ENCODE measurements at regions of chr14 and their contacts with region 1.

Region 1: DNA sequence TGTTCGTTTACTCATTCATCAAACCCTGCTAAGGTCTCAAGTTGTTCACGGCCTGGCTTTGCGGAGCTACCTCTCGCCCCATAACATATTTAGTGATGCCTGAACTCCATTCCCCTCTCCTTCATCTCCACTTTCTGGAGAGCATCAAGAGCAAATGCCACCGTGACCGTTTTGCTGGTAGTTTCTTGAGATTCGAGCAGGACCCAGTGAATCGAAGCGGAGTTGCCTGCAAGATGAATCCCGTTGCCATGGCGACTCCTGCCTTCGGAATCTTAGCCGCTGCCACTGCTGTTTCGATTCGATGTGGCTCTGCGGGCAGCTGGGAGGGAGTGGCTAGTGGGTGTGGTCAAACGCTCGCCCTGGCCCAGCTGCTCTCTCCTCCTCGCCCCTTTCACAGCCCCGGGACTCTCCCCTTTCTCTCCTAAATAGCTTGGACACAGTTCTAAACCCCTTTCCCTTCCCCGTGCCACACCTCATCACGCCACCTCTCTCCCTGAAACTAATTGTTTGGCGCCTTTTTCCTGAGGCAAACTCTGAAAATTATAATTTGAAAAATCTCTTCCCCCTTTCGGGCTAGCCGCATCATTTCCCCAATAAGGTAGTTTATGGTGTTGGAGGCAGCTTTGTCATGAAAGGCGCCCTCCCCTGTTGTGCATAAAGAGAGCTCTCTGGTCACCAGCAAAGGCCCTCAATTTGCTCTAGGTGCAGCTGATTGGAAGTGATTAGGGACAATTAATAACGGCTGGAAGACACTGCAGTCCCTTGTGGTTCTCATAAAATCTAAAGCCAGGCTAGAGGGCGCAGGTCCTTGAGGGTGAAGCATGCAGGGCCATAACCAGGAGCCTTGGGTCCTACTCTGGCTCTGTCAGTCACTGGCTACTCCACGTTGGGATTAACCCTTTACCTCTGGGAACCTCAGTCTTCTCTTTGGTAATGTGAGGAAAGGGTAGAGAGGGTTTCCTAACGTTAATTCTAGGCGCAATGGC is 1.6 kb downstream of the DAAM1 start:
- DNase-seq: peak; percentile 83
- H3K4me3 ChIP-seq: peak overlapping the region; percentile 85
- H3K27ac ChIP-seq: peak overlapping the region; percentile 73
- H3K4me1 ChIP-seq: peaks cover 61% of the 10 kb centered on the region
- CTCF ChIP-seq: peak; percentile 74

Region 2: DNA sequence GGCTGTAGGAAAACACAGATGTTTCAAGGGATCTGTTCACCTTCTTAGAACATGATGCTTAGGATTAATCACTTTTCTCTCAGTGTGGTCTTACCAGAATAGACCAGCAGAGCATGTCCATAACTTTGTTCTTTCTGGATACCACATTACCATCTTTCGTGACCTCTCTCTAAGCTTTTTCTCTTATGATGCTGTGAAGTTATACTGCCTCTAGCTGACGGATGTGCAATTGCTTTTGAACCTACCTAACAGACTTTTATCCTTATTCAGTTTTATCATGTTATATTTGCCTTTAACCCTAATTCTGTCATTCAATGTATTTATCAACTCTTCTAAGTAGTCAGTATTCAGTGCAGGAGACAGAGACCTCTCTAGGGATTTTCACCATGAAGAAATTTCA is 305.6 kb before region 1 on chr14:
- CTCF ChIA-PET with region 1: no interaction called
- POLR2A ChIA-PET with region 1: no interaction called
- intact Hi-C with region 1: no loop called
- DNase-seq: peak; percentile 8
- H3K4me3 ChIP-seq: no peak overlapping the region
- H3K27ac ChIP-seq: no peak overlapping the region
- H3K4me1 ChIP-seq: no peaks in the 10 kb centered on the region
- CTCF ChIP-seq: peak; percentile 69

Region 3: DNA sequence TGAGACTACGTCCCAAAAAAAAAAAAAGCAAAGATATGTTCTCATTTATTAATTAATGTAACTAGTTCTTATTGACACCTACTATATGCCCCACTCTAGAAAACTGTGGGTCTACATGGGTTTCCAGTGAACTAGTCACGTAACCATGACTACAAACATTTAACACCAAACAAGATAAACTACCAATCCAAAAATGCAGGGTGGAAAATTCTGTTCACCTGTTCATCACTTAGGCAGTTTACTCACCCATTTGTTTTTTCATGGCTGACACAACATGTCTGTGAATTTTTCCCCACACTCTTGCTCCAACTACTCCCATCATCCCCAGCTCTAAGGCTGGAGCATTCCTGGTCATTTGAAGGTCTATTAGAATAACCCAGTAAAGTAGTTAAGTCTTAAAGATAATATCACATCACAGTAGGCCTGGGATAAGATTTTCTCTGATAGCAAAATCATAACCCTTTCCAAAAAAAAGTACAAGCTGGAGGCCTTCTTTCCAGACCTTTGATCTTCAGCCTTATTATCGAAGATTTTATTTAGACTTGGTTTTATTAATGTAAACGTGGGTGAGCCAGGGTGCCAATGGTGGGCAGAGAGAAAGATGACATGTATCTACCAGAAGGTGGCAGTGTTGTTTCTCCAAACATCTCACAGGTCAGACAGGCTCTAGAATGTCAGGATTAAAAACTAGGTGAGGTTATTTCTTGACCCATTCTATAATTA is 63.2 kb before region 1 on chr14:
- CTCF ChIA-PET with region 1: interaction called, 3 read pairs
- POLR2A ChIA-PET with region 1: interaction called, 3 read pairs
- intact Hi-C with region 1: loop called (anchors 1 kb)
- DNase-seq: peak; percentile 83
- H3K4me3 ChIP-seq: no peak overlapping the region
- H3K27ac ChIP-seq: no peak overlapping the region
- H3K4me1 ChIP-seq: peaks cover 21% of the 10 kb centered on the region
- CTCF ChIP-seq: peak; percentile 98

Region 4: GRCh38 chr14:59150990-59151389 is 39.1 kb before region 1 on chr14:
- CTCF ChIA-PET with region 1: no interaction called
- POLR2A ChIA-PET with region 1: interaction called, 11 read pairs
- intact Hi-C with region 1: loop called (anchors 1 kb)
- DNase-seq: peak; percentile 82
- H3K4me3 ChIP-seq: peak overlapping the region; percentile 8
- H3K27ac ChIP-seq: peak overlapping the region; percentile 66
- H3K4me1 ChIP-seq: peaks cover 62% of the 10 kb centered on the region
- CTCF ChIP-seq: no peak

Region 5: GRCh38 chr14:59301354-59301753 is 111.3 kb after region 1 on chr14:
- CTCF ChIA-PET with region 1: interaction called, 3 read pairs
- POLR2A ChIA-PET with region 1: interaction called, 7 read pairs
- intact Hi-C with region 1: loop called (anchors 1 kb)
- DNase-seq: peak; percentile 96
- H3K4me3 ChIP-seq: peak overlapping the region; percentile 57
- H3K27ac ChIP-seq: peak overlapping the region; percentile 99
- H3K4me1 ChIP-seq: peaks cover 98% of the 10 kb centered on the region
- CTCF ChIP-seq: no peak

Region 6: DNA sequence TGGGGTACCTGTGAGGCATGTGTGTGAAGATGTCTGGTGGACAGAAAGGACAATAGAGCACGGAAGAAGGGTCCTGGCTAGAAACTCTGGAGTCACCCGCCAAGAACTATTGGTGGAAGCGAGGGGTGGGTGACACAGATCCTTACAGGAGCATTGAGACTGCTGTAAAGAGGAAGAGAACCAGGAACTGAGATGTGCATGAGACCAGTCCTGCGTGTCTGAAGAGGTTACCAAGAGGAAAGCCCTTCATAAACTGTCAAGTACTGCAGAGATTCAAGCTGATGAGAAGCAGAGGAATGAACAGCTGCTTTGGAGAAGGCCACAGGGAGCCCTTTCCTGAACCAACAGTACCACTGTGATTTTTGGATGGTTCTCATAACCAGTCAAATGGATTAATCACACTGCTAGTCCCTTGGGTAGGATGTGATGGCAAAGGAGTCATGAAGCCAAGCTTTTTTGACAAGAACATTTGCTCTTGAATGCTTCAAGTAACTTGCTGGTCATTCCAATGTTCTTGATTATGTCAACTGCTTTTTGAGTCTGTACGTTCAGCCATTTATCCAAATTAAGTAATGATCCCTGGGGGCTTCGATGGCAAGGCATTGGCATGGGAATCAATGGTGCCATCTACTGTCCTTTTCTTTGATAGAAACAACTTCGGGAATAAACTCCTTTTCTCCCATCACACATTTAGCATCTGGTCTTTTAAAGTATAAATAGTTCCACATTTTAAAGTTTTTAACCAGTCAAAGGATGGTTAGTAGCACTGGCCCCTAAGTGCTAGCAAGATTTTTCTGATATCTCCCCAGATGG is 232.2 kb after region 1 on chr14:
- CTCF ChIA-PET with region 1: no interaction called
- POLR2A ChIA-PET with region 1: no interaction called
- intact Hi-C with region 1: loop called (anchors 5 kb)
- DNase-seq: peak; percentile 64
- H3K4me3 ChIP-seq: no peak overlapping the region
- H3K27ac ChIP-seq: peak overlapping the region; percentile 16
- H3K4me1 ChIP-seq: peaks cover 26% of the 10 kb centered on the region
- CTCF ChIP-seq: peak; percentile 79

Region 7: DNA sequence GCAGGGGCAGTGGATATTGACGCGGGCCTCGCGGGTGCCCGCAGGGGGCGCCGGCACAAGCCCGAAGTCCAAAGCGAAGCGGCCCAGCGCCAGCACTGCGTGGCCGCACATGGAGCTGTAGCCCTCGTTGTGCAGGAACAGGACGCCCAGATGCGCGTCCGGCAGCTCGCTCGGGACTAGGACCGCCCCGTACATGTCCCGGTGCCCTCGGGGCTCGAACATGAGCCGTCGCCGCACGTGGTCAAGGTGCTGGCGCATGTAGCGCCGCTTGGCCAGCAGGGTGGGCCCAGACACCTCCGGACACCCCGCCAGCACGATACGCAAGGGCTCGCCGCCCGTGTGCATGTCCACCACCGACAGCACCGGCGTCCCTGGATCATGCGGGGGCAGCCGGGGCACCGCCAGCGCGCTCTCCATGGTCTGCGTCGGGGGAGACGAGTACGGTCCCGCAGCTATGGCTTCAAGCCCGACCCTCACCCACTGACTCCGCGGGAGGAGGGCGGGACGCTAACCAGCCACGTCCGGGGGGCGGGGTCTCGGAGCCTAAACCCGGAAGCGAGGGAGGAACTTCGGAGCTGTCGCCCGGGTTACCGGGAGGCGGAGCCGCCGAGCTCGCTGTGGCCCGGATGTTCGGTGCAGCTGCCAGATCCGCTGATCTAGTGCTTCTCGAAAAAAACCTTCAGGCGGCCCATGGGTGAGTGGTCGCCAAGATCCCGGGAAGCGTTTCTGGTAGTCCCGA is 294.0 kb after region 1 on chr14 and contains the starts of genes JKAMP and L3HYPDH:
- CTCF ChIA-PET with region 1: no interaction called
- POLR2A ChIA-PET with region 1: interaction called, 3 read pairs
- intact Hi-C with region 1: loop called (anchors 1 kb)
- DNase-seq: peak; percentile 98
- H3K4me3 ChIP-seq: peak within 1 kb of the TSS; percentile 87
- H3K27ac ChIP-seq: peak within 1 kb of the TSS; percentile 58
- H3K4me1 ChIP-seq: peaks cover 38% of the 10 kb centered on the region
- CTCF ChIP-seq: peak; percentile 69
- total RNA-seq, gene JKAMP: 19.7 and 24.9 TPM in 2 replicates
- total RNA-seq, gene L3HYPDH: 43.2 and 43.5 TPM in 2 replicates